ENCODE measurements at regions of chr16 and their contacts with region 1.

Region 1: GRCh38 chr16:24800586-24800985 is 45.2 kb upstream of the SLC5A11 start:
- DNase-seq: no peak
- H3K4me3 ChIP-seq: no peak overlapping the region
- H3K4me3 Mint-ChIP-seq: no peak overlapping the region
- H3K27ac ChIP-seq: no peak overlapping the region
- H3K27ac Mint-ChIP-seq: peak overlapping the region in 1 of 7 donors; percentile 24
- H3K4me1 ChIP-seq: no peaks in the 10 kb centered on the region
- H3K4me1 Mint-ChIP-seq: peaks cover 0 to 4% (median 0%) of the 10 kb centered on the region in 4 donors
- H3K27me3 ChIP-seq: no peaks in the 10 kb centered on the region
- H3K27me3 Mint-ChIP-seq: no peaks in the 10 kb centered on the region

Region 2: GRCh38 chr16:24516900-24517669 is 283.5 kb before region 1 on chr16:
- CTCF ChIA-PET with region 1: no interaction called
- POLR2A ChIA-PET with region 1: no interaction called
- intact Hi-C with region 1: loop called (anchors 10 kb)
- DNase-seq: peak; percentile 62 to 69 (median 67)
- H3K4me3 ChIP-seq: no peak overlapping the region
- H3K4me3 Mint-ChIP-seq: peak overlapping the region in 6 of 8 donors; percentile 3 to 55 (median 46)
- H3K27ac ChIP-seq: no peak overlapping the region
- H3K27ac Mint-ChIP-seq: peak overlapping the region in 3 of 7 donors; percentile 14 to 88 (median 71)
- H3K4me1 ChIP-seq: no peaks in the 10 kb centered on the region
- H3K4me1 Mint-ChIP-seq: peaks cover 4 to 6% (median 5%) of the 10 kb centered on the region in 4 donors
- H3K27me3 ChIP-seq: no peaks in the 10 kb centered on the region
- H3K27me3 Mint-ChIP-seq: peaks cover 2 to 3% of the 10 kb centered on the region in 2 donors

Region 3: DNA sequence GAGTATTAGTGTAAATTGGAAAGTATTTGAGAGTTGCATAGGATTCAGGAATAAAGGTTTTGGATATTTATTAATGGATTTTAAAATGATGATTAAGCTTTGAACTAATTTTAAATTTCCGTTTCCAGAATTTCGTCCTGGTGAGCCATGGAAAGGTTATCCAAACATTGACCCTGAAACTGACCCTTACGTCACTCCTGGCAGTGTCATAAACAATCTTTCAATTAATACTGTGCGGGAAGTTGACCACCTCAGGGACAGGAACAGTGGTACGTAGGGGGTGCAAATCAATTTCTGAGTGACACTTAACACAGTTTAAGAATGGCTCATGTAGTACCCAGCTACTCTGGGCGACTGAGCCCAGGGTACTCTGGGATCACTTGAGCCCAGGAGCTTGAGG is 16.1 kb after region 1 on chr16:
- CTCF ChIA-PET with region 1: interaction called, 6 read pairs
- POLR2A ChIA-PET with region 1: no interaction called
- intact Hi-C with region 1: loop called (anchors 1 kb)
- DNase-seq: no peak
- H3K4me3 ChIP-seq: no peak overlapping the region
- H3K4me3 Mint-ChIP-seq: no peak overlapping the region
- H3K27ac ChIP-seq: no peak overlapping the region
- H3K27ac Mint-ChIP-seq: peak overlapping the region in 1 of 7 donors; percentile 48
- H3K4me1 ChIP-seq: no peaks in the 10 kb centered on the region
- H3K4me1 Mint-ChIP-seq: no peaks in the 10 kb centered on the region
- H3K27me3 ChIP-seq: no peaks in the 10 kb centered on the region
- H3K27me3 Mint-ChIP-seq: no peaks in the 10 kb centered on the region

Region 4: DNA sequence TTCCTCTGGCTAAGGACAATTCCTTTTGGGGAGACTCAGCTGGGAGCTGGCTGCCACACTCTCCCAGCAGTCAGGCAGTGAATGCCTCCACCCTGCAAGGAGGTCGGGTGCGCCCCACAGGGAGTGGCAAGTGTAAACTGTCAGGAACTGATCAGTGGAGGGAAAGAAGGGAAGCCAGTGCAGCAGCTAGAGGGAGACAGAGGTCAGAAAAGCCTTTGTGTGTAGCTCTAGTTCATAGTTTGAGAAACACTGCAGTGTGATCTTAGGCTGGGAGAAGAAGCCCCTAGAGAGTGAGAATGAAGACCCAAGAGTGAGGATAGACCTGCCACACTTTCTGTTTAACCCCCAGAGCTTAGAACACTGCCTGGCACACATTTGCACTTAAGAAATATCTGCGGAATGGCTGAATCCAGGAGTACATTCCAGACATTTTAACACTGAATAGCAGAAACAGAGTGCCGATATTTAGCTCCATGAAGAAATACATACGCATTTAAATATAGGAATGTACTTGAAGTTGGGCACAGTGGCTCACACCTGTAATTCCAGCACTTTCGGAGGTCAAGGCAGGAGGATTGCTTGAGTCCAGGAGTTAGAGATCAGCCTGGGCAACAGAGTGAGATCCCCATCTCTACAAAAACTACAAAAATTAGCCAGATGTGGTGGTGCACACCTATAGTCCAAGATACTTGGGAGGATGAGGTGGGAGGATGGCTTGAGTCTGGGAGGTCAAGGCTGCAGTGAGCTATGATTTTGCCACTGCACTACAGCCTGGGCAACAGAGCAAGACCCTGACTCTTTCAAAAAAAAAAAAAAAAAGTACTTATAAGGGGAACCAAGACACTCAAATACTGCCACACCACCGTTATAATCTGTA is 34.1 kb after region 1 on chr16:
- CTCF ChIA-PET with region 1: no interaction called
- POLR2A ChIA-PET with region 1: no interaction called
- intact Hi-C with region 1: no loop called
- DNase-seq: no peak
- H3K4me3 ChIP-seq: no peak overlapping the region
- H3K4me3 Mint-ChIP-seq: no peak overlapping the region
- H3K27ac ChIP-seq: no peak overlapping the region
- H3K27ac Mint-ChIP-seq: no peak overlapping the region
- H3K4me1 ChIP-seq: no peaks in the 10 kb centered on the region
- H3K4me1 Mint-ChIP-seq: no peaks in the 10 kb centered on the region
- H3K27me3 ChIP-seq: no peaks in the 10 kb centered on the region
- H3K27me3 Mint-ChIP-seq: no peaks in the 10 kb centered on the region

Measured in CD4-positive, alpha-beta memory T cell (primary cell).